CD4-positive, alpha-beta T cell (primary cell): ENCODE measurements at regions of chr7 and their contacts with region 1.

Region 1: DNA sequence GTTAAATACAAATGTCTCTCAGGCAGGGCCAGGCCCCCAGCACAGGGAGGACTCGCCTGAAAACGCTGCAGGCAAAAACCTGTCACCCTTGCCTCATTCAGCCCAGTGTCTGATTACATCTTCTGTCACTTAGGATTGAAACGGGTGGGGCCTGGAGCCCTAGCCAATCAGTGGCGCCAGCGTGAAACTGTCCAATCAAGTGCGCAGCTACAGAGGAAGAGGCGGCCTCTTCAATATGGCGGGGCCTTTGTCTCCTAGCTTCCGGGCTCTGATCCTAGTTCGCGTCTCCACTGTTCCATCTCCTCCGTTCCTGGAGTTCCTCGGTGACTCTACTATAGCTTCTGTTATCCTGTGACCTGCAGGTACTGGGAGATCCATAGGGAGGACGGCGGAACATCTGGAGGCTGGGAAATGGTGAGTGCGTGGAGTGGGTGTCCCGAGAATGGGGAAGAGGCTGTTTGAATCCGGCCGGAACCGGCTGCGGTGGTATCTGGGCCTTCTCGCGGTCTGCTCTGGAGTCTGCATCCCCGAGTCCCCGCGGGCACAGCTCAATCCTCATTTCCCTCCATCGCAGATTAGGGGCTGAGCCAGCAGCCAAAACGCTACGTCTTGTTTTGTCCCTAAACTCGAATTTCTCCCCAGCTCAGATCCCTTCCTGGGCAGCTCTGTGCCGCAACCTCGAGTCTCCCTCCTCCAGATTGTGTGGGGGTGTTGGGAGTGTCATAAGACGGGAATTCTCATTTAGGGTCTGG is at the start of gene ZNF736:
- DNase-seq: peak; percentile 76 to 95 (median 82)
- ATAC-seq: peak; percentile 100
- H3K4me3 ChIP-seq: peak within 1 kb of the TSS; percentile 99
- H3K4me3 Mint-ChIP-seq: peak within 1 kb of the TSS; percentile 96
- H3K27ac ChIP-seq: peak within 1 kb of the TSS in 1 of 2 donors; percentile 84
- H3K27ac Mint-ChIP-seq: peak within 1 kb of the TSS; percentile 93
- H3K4me1 ChIP-seq: peaks cover 23% of the 10 kb centered on the region
- H3K4me1 Mint-ChIP-seq: peaks cover 33% of the 10 kb centered on the region
- H3K27me3 ChIP-seq: no peaks in the 10 kb centered on the region
- H3K27me3 Mint-ChIP-seq: no peaks in the 10 kb centered on the region
- CTCF ChIP-seq: no peak
- total RNA-seq, gene ZNF736: 29.9 to 30.8 TPM

Region 2: GRCh38 chr7:64562626-64563275 is 248.8 kb after region 1 on chr7 and contains the start of gene ZNF680:
- CTCF ChIA-PET with region 1: no interaction called
- POLR2A ChIA-PET with region 1: interaction called, 25 read pairs
- intact Hi-C with region 1: loop called (anchors 5 kb)
- DNase-seq: peak; percentile 79 to 95 (median 84)
- ATAC-seq: peak; percentile 98
- H3K4me3 ChIP-seq: peak within 1 kb of the TSS; percentile 93
- H3K4me3 Mint-ChIP-seq: peak within 1 kb of the TSS; percentile 100
- H3K27ac ChIP-seq: peak within 1 kb of the TSS; percentile 41
- H3K27ac Mint-ChIP-seq: peak within 1 kb of the TSS; percentile 88
- H3K4me1 ChIP-seq: peaks cover 21% of the 10 kb centered on the region
- H3K4me1 Mint-ChIP-seq: peaks cover 41% of the 10 kb centered on the region
- H3K27me3 ChIP-seq: no peaks in the 10 kb centered on the region
- H3K27me3 Mint-ChIP-seq: no peaks in the 10 kb centered on the region
- CTCF ChIP-seq: no peak
- total RNA-seq, gene ZNF680: 8.3 to 8.9 TPM

Region 3: DNA sequence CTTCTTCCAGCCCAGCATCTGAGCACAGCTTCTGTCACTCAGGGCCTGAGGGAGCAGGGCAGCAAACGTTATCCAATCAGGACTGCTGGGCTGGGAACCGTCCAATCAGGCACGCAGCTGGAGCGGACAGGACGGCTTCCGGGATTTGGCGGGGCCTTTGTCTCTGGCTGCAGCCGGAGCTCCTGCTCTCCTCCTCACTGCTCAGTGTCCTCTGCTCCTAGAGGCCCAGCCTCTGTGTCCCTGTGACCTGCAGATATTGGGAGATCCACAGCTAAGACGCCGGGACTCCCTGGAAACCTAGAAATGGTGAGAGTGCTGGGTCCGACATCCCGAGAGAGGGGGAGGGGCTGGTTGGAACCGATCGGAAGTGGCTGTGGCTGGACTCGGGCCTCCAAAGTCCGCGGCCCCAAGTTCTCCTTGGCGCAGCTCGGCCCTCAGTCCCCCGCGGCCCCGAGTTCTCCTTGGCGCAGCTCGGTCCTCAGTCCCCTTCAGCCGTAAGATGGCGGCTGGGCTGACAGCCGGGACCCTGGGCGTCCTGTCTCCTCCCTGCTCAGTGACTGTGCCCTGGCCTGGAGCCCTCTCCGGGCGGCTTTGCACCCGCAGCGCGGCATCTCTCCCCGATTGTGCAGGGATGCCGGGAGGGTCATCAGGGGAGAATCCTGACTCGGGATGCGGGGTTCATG is 352.2 kb after region 1 on chr7 and contains the start of gene ZNF107:
- CTCF ChIA-PET with region 1: no interaction called
- POLR2A ChIA-PET with region 1: interaction called, 25 read pairs
- intact Hi-C with region 1: loop called in 1 of 2 experiments (anchors 5 kb)
- DNase-seq: peak; percentile 71 to 96 (median 79)
- ATAC-seq: peak; percentile 95
- H3K4me3 ChIP-seq: peak within 1 kb of the TSS; percentile 83
- H3K4me3 Mint-ChIP-seq: peak within 1 kb of the TSS; percentile 98
- H3K27ac ChIP-seq: peak within 1 kb of the TSS; percentile 82
- H3K27ac Mint-ChIP-seq: peak within 1 kb of the TSS; percentile 98
- H3K4me1 ChIP-seq: peaks cover 23% of the 10 kb centered on the region
- H3K4me1 Mint-ChIP-seq: peaks cover 76% of the 10 kb centered on the region
- H3K27me3 ChIP-seq: no peaks in the 10 kb centered on the region
- H3K27me3 Mint-ChIP-seq: no peaks in the 10 kb centered on the region
- CTCF ChIP-seq: no peak
- total RNA-seq, gene ZNF107: 12.4 TPM

Region 4: DNA sequence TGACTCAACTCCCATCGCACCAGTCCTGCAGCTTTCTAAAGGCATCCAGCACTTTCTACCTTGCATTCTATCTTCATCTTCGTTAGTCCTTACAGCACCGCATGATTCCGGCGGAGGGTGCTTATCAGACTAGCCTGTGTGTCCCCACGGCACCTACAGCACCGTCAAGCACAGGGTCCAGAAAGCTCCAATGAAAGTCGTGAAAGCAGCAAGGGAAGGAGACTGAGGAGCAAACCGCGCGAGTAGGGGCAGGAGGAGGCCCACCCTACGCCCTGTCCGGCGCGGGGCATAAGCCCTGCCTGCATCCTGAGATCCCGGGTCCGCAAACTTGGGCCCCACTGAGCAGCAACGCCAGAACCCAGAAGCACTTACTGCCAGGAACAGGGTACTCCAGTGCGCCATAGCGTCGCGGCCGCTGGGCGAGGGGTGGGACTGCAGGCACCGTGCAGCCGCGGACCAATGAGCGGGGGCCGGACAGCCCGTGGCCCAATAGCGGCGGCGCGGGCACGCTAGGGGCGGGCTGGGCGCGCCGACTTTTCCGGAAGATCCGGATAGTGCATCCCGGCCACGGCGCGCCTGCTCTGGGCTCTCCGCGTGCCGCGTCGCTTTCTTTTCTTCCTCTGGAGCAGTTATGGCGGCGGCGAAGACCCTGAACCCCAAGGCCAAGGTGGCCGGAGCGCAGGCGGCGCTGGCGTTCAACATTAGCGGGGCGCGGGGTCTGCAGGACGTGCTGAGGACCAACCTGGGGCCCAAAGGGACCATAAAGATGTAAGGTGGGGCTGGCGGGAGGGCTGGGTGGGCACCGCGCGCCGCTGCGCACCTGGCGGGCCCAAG is 1436.8 kb after region 1 on chr7:
- CTCF ChIA-PET with region 1: no interaction called
- POLR2A ChIA-PET with region 1: no interaction called
- intact Hi-C with region 1: loop called in 1 of 2 experiments (anchors 5 kb)
- DNase-seq: peak; percentile 70 to 92 (median 84)
- ATAC-seq: peak; percentile 96
- H3K4me3 ChIP-seq: peak overlapping the region; percentile 98
- H3K4me3 Mint-ChIP-seq: peak overlapping the region; percentile 99
- H3K27ac ChIP-seq: peak overlapping the region; percentile 56 to 69
- H3K27ac Mint-ChIP-seq: peak overlapping the region; percentile 96
- H3K4me1 ChIP-seq: peaks cover 25% of the 10 kb centered on the region
- H3K4me1 Mint-ChIP-seq: peaks cover 33% of the 10 kb centered on the region
- H3K27me3 ChIP-seq: no peaks in the 10 kb centered on the region
- H3K27me3 Mint-ChIP-seq: no peaks in the 10 kb centered on the region
- CTCF ChIP-seq: no peak